ENCODE measurements at regions of chr10 and their contacts with region 1.

Region 1: GRCh38 chr10:92573798-92574547 is at the start of gene IDE:
- DNase-seq: peak; percentile 87
- H3K4me3 ChIP-seq: peak within 1 kb of the TSS; percentile 78 to 97 (median 92)
- H3K27ac ChIP-seq: peak within 1 kb of the TSS; percentile 77
- H3K4me1 ChIP-seq: peaks cover 28% of the 10 kb centered on the region
- H3K27me3 ChIP-seq: no peaks in the 10 kb centered on the region
- CTCF ChIP-seq: peak; percentile 44 to 94
- total RNA-seq, gene IDE: 27.8 to 37.8 TPM

Region 2: GRCh38 chr10:92087750-92088395 is 486.1 kb before region 1 on chr10:
- CTCF ChIA-PET with region 1: no interaction called
- dilution Hi-C with region 1: no loop called
- in situ Hi-C with region 1: no loop called
- intact Hi-C with region 1: loop called (anchors 10 kb)
- DNase-seq: peak; percentile 75
- H3K4me3 ChIP-seq: no peak overlapping the region
- H3K27ac ChIP-seq: no peak overlapping the region
- H3K4me1 ChIP-seq: no peaks in the 10 kb centered on the region
- H3K27me3 ChIP-seq: no peaks in the 10 kb centered on the region
- CTCF ChIP-seq: peak; percentile 89 to 92

Region 3: GRCh38 chr10:92381543-92381954 is 192.4 kb before region 1 on chr10:
- CTCF ChIA-PET with region 1: no interaction called
- dilution Hi-C with region 1: no loop called
- in situ Hi-C with region 1: no loop called
- intact Hi-C with region 1: no loop called
- DNase-seq: no peak
- H3K4me3 ChIP-seq: no peak overlapping the region
- H3K27ac ChIP-seq: no peak overlapping the region
- H3K4me1 ChIP-seq: no peaks in the 10 kb centered on the region
- H3K27me3 ChIP-seq: no peaks in the 10 kb centered on the region
- CTCF ChIP-seq: no peak

Region 4: DNA sequence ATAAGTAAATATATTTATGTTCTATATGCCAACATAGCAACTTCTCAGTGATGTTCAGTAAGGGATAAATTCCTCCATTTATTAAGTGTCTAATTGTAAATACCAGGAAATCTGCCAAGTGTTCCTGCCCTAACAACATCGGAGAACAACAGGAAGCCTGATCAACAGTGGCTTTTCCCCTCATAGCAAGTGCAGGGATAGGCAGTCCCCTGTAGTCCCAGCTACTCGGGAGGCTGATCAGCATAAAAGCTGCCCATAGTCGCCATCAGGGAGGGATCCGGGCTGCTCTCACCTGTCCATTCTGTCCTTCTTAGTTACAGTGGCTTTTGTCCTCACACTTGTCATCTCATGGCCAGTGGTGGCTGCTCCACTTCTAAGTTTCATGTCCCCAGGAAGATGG is 141.4 kb before region 1 on chr10:
- CTCF ChIA-PET with region 1: no interaction called
- dilution Hi-C with region 1: no loop called
- in situ Hi-C with region 1: no loop called
- intact Hi-C with region 1: loop called (anchors 5 kb)
- DNase-seq: no peak
- H3K4me3 ChIP-seq: no peak overlapping the region
- H3K27ac ChIP-seq: no peak overlapping the region
- H3K4me1 ChIP-seq: no peaks in the 10 kb centered on the region
- H3K27me3 ChIP-seq: no peaks in the 10 kb centered on the region
- CTCF ChIP-seq: no peak

Region 5: GRCh38 chr10:92517034-92517655 is 56.8 kb before region 1 on chr10:
- CTCF ChIA-PET with region 1: interaction called, 3 read pairs
- dilution Hi-C with region 1: no loop called
- in situ Hi-C with region 1: loop called (anchors 5 to 10 kb)
- intact Hi-C with region 1: loop called (anchors 1 kb)
- DNase-seq: peak; percentile 45
- H3K4me3 ChIP-seq: no peak overlapping the region
- H3K27ac ChIP-seq: no peak overlapping the region
- H3K4me1 ChIP-seq: no peaks in the 10 kb centered on the region
- H3K27me3 ChIP-seq: no peaks in the 10 kb centered on the region
- CTCF ChIP-seq: peak; percentile 70 to 73

Region 6: GRCh38 chr10:92544296-92544695 is 29.7 kb before region 1 on chr10:
- CTCF ChIA-PET with region 1: no interaction called
- dilution Hi-C with region 1: no loop called
- in situ Hi-C with region 1: no loop called
- intact Hi-C with region 1: loop called (anchors 2 kb)
- DNase-seq: peak; percentile 75
- H3K4me3 ChIP-seq: no peak overlapping the region
- H3K27ac ChIP-seq: no peak overlapping the region
- H3K4me1 ChIP-seq: peaks cover 11% of the 10 kb centered on the region
- H3K27me3 ChIP-seq: no peaks in the 10 kb centered on the region
- CTCF ChIP-seq: no peak

Region 7: GRCh38 chr10:92592761-92593618 is 19.0 kb after region 1 on chr10 and contains the start of gene KIF11:
- CTCF ChIA-PET with region 1: interaction called, 13 read pairs
- dilution Hi-C with region 1: no loop called
- in situ Hi-C with region 1: no loop called
- intact Hi-C with region 1: loop called (anchors 1 kb)
- DNase-seq: peak; percentile 95
- H3K4me3 ChIP-seq: peak within 1 kb of the TSS; percentile 62 to 94 (median 87)
- H3K27ac ChIP-seq: peak within 1 kb of the TSS; percentile 87
- H3K4me1 ChIP-seq: peaks cover 17% of the 10 kb centered on the region
- H3K27me3 ChIP-seq: no peaks in the 10 kb centered on the region
- CTCF ChIP-seq: no peak
- total RNA-seq, gene KIF11: 2.7 to 22.4 TPM

Measured in mammary epithelial cell (primary cell).